Right ventricle myocardium superior (tissue), 1 donor: ENCODE measurements at regions of chr7 and their contacts with region 1.

Region 1: DNA sequence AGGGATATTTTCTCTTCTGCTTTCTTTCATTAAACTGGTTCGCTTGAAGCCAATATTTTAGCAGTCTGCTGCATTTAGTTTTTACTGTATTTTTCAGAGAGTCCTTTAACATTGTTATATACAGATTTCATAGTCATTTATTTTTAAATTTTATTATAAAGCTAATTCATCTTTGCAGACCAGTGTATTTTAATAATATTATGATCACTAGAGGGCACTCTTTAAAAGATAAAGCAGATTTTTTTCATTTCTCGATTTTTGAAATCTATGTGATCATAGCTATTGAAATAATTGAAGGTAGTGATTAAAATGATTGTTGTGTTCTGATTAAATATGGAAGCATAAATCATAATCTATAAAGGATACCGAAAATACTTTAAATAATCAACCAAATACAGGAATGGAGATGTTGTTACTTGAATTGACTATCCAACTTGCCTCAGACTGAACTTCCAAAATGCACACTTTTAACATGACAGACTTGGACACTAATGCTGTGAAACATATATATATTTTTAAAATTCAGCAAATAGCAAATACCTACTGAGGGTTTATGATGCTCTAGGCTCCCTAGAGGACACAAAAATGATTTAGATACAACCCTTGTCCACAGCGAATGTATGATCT is 35.2 kb downstream of the ST7 start:
- DNase-seq: no peak
- ATAC-seq: no peak

Region 2: GRCh38 chr7:116942504-116942903 is 46.0 kb before region 1 on chr7:
- intact Hi-C with region 1: no loop called
- DNase-seq: no peak
- ATAC-seq: peak; percentile 34

Region 3: DNA sequence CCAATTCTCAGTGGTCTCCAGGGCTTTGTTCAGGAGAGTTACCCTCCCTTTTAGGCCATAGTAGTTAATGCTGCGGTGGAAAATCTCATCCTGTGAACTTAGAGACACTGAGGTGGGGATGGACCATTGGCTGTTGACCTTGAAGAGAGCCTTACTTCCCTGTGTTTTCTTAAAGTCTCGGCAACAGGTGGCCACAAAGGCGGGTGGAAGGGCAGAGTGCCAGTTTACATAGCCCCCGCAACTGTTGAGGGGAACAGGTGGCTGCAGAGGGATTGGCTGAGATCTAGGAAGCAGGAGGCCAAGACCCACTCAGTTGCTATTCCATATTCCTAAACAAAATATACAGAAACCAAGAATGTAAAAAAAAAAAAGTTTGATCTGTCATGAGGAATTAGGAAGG is 125.4 kb after region 1 on chr7:
- intact Hi-C with region 1: loop called (anchors 2 kb)
- DNase-seq: no peak
- ATAC-seq: no peak

Region 4: DNA sequence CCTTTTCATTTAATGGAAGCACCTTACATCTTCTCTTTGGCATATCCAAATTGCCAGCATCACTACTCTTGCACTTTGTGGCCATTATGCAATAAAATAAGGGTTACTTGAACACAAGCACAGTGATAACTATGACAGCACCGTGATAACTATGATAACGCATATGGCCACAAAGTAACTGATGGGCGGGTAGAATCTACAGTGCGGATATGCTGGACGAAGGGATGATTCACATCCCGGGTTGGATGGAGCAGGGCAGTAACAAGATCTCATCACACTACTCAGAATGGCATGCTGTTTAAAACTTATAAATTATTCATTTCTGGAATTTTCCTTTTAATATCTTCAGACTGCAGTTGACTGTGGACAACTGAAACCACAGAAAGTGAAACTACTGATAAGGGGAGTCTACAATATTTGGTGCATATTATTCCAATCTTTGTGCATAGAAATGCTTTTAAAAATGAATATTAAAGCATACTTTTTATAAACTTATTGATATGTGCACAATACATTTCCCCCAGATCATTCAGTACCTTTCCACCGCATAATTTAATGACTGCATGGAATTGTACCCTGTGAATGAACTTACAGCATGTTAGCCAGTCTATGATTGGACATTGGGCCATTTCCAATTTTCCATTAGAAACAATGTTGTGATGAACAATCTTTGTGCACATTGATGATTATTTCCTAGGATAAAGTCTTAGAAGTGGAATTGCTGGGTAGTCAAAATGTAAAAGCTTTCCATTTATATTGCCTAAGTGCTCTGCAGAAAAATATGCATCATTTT is 197.9 kb after region 1 on chr7:
- intact Hi-C with region 1: no loop called
- DNase-seq: no peak
- ATAC-seq: no peak